ENCODE measurements at regions of chr9 and their contacts with region 1.

Region 1: DNA sequence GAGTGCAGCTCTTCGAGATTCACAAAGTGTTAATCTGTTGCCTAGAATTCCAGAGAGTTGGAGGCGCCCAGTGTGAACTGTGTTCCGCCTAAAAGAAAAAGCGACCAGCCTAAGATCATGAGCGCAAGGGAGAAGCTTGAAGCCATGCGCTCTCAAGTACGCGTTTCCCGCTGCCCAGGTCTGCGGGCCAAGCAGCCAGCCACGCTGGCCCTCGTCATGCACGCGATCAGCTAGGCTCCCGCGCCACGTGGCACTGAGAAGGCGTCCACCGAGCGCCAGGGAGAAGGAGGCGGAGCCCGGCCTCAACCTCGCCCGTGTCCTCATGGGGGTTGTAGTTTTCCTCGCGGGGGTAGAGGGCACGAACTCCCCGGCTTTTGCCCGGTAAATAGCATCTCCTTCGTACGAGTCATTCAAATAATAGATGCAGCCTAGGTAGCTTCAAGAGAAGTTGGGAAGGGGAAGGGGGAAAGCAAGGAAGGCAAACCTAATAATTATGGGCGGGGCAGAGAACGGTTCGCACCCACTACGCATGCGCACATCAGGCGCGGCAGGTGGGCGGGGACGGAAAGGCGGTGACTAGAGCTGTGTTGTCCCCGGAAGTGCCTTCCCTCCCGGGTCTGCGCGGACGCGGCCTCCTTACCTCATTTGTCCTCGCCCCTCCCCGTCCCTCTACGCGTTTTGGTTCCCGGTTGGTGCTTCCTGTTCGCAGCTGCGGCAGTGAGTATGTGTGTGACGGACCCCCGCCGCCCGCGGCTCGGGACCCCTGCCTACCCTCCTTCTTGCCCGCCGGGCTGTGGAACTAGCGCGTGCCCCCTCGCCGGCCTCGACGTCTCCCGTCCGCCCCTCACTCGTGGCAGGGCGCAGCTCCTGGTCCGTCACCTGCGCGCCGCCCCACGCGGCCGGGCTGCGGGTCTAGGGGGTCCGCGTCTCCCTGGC is at the start of gene ZCCHC7:
- DNase-seq: peak; percentile 94 to 97 (median 97)
- H3K4me3 ChIP-seq: peak within 1 kb of the TSS; percentile 81 to 98 (median 93)
- H3K4me3 Mint-ChIP-seq: peak within 1 kb of the TSS; percentile 91 to 98
- H3K27ac ChIP-seq: peak within 1 kb of the TSS; percentile 53 to 98
- H3K27ac Mint-ChIP-seq: peak within 1 kb of the TSS; percentile 95 to 100 (median 99)
- H3K4me1 ChIP-seq: peaks cover 13 to 19% of the 10 kb centered on the region in 2 donors
- H3K4me1 Mint-ChIP-seq: peaks cover 15% of the 10 kb centered on the region
- H3K27me3 ChIP-seq: no peaks in the 10 kb centered on the region
- H3K27me3 Mint-ChIP-seq: peaks cover 0 to 3% (median 0%) of the 10 kb centered on the region in 3 donors
- CTCF ChIP-seq: no peak
- polyA plus RNA-seq, gene ZCCHC7: 8.7 to 12.9 (median 12.5) TPM

Region 2: DNA sequence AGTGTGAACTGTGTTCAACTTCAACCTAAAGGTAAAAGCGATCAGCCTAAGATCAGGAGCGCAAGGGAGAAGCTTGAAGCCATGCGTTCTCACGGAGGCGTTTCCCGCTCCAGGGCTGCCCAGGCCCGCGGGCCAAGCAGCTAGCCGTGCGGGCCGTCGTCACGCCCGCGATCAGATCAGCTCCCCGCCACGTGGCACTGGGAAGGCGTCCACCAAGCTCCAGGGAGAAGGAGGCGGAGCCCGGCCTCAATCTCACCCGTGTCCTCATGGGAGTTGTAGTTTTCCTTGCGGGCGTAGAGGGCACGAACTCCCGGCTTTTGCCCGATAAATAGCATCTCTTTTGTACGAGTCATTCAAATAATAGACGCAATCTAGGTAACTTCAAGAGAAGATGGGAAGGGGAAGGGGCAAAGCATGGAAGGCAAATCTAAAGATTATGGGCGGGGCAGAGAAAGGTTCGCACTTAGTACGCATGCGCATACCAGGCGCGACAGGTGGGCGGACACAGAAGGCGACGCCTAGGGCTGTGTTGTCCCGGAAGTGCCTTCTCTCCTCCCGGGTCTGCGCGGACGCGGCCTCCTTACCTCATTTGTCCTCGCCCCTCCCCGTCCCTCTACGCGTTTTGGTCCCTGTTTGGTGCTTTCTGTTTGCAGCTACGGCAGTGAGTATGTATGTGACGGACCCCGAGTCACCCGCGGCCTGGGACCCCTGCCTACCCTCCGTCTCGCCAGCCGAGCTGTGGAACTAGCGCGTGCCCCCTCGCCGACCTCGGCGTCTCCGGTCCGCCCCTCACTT is 40.6 kb before region 1 on chr9:
- intact Hi-C with region 1: loop called (anchors 5 kb)
- DNase-seq: peak; percentile 93 to 96 (median 94)
- H3K4me3 ChIP-seq: peak overlapping the region; percentile 77 to 97 (median 95)
- H3K4me3 Mint-ChIP-seq: peak overlapping the region; percentile 95 to 99
- H3K27ac ChIP-seq: peak overlapping the region; percentile 45 to 95
- H3K27ac Mint-ChIP-seq: peak overlapping the region; percentile 92 to 98 (median 95)
- H3K4me1 ChIP-seq: peaks cover 8 to 18% of the 10 kb centered on the region in 2 donors
- H3K4me1 Mint-ChIP-seq: peaks cover 25% of the 10 kb centered on the region
- H3K27me3 ChIP-seq: no peaks in the 10 kb centered on the region
- H3K27me3 Mint-ChIP-seq: peaks cover 3 to 19% (median 13%) of the 10 kb centered on the region in 3 donors
- CTCF ChIP-seq: no peak

Region 3: GRCh38 chr9:37197158-37198038 is 77.2 kb after region 1 on chr9:
- intact Hi-C with region 1: loop called in 1 of 2 experiments (anchors 10 kb)
- DNase-seq: peak; percentile 28 to 71 (median 36)
- H3K4me3 ChIP-seq: no peak overlapping the region
- H3K4me3 Mint-ChIP-seq: peak overlapping the region in 1 of 2 donors; percentile 47
- H3K27ac ChIP-seq: peak overlapping the region in 1 of 2 donors; percentile 50
- H3K27ac Mint-ChIP-seq: peak overlapping the region; percentile 1 to 91 (median 68)
- H3K4me1 ChIP-seq: peaks cover 21 to 23% of the 10 kb centered on the region in 2 donors
- H3K4me1 Mint-ChIP-seq: peaks cover 32% of the 10 kb centered on the region
- H3K27me3 ChIP-seq: no peaks in the 10 kb centered on the region
- H3K27me3 Mint-ChIP-seq: peaks cover 0 to 3% (median under 1%) of the 10 kb centered on the region in 3 donors
- CTCF ChIP-seq: no peak

Region 4: GRCh38 chr9:37485389-37486219 is 365.4 kb after region 1 on chr9 and contains the start of gene POLR1E:
- intact Hi-C with region 1: loop called in 1 of 2 experiments (anchors 10 kb)
- DNase-seq: peak; percentile 91 to 94 (median 93)
- H3K4me3 ChIP-seq: peak within 1 kb of the TSS; percentile 66 to 85 (median 75)
- H3K4me3 Mint-ChIP-seq: peak within 1 kb of the TSS; percentile 88 to 93
- H3K27ac ChIP-seq: peak within 1 kb of the TSS in 1 of 2 donors; percentile 56
- H3K27ac Mint-ChIP-seq: peak within 1 kb of the TSS; percentile 57 to 92 (median 74)
- H3K4me1 ChIP-seq: peaks cover 15 to 24% of the 10 kb centered on the region in 2 donors
- H3K4me1 Mint-ChIP-seq: peaks cover 23% of the 10 kb centered on the region
- H3K27me3 ChIP-seq: peaks cover 0 to 2% of the 10 kb centered on the region in 2 donors
- H3K27me3 Mint-ChIP-seq: peaks cover 4 to 10% (median 6%) of the 10 kb centered on the region in 3 donors
- CTCF ChIP-seq: no peak
- polyA plus RNA-seq, gene POLR1E: 2.3 to 4.1 (median 2.4) TPM

Region 5: GRCh38 chr9:37592108-37592951 is 472.2 kb after region 1 on chr9 and contains the start of gene TOMM5:
- intact Hi-C with region 1: loop called in 1 of 2 experiments (anchors 10 kb)
- DNase-seq: peak; percentile 86 to 93 (median 91)
- H3K4me3 ChIP-seq: peak within 1 kb of the TSS; percentile 63 to 94 (median 77)
- H3K4me3 Mint-ChIP-seq: peak within 1 kb of the TSS; percentile 98 to 99
- H3K27ac ChIP-seq: peak within 1 kb of the TSS; percentile 75 to 96
- H3K27ac Mint-ChIP-seq: peak within 1 kb of the TSS; percentile 94 to 98 (median 97)
- H3K4me1 ChIP-seq: peaks cover 28 to 32% of the 10 kb centered on the region in 2 donors
- H3K4me1 Mint-ChIP-seq: peaks cover 34% of the 10 kb centered on the region
- H3K27me3 ChIP-seq: peaks cover 0 to 4% of the 10 kb centered on the region in 2 donors
- H3K27me3 Mint-ChIP-seq: peaks cover 4 to 11% (median 7%) of the 10 kb centered on the region in 3 donors
- CTCF ChIP-seq: no peak
- polyA plus RNA-seq, gene TOMM5: 35.0 to 117 (median 112) TPM